Mammary epithelial cell (primary cell): ENCODE measurements at regions of chrX and their contacts with region 1.

Region 1: GRCh38 chrX:112078606-112079005 is 4.0 kb downstream of the TRPC5 start:
- DNase-seq: no peak
- H3K4me3 ChIP-seq: no peak overlapping the region
- H3K27ac ChIP-seq: no peak overlapping the region
- H3K4me1 ChIP-seq: no peaks in the 10 kb centered on the region
- H3K27me3 ChIP-seq: peaks cover 3% of the 10 kb centered on the region
- CTCF ChIP-seq: no peak

Region 2: DNA sequence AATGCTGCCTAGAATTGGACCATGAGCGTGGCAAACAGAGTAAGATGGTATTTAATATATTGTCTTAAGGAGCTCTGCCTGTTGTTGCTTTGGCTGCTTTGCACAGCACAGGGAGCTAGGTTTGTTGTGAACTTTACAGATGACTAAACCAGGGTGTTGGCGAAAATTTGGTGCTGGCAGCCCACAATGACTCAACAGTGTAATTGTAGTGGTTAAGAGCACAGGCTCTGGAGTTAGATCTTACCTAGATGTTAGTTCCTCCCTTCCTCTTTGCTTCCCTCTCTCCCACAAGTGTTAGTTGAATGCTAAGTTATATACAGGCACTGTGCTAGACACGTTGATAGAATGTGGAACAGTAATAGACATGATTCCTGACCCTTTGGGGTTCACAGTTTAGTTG is 132.9 kb after region 1 on chrX:
- CTCF ChIA-PET with region 1: no interaction called
- dilution Hi-C with region 1: no loop called
- in situ Hi-C with region 1: no loop called
- intact Hi-C with region 1: loop called (anchors 10 kb)
- DNase-seq: peak; percentile 8
- H3K4me3 ChIP-seq: no peak overlapping the region
- H3K27ac ChIP-seq: no peak overlapping the region
- H3K4me1 ChIP-seq: no peaks in the 10 kb centered on the region
- H3K27me3 ChIP-seq: no peaks in the 10 kb centered on the region
- CTCF ChIP-seq: no peak